Activated naive CD4-positive, alpha-beta T cell treated with anti-CD3 and anti-CD28 coated beads for 36 hours (primary cell): ENCODE measurements at regions of chr14 and their contacts with region 1.

Region 1: DNA sequence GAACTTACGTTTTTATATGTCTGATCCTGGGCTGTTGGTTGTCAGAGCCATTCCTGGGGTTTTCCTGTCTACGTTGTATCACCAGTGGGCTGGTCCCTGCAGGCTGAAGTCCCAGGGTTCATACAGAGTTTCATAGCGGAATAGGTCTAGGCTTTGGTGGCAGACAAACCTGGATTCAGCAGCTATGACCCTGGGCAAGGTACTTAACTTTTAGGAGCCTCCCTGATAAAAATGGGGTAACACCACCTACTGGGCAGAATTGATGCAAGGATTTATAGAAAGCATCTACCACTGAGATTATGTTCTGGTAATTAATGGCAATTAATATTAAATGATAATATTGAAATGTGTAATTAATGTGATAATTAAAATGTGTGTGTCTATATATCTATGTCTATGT is 141.2 kb downstream of the SYNE2 start:
- DNase-seq: peak; percentile 15
- H3K4me3 Mint-ChIP-seq: no peak overlapping the region
- H3K27ac Mint-ChIP-seq: no peak overlapping the region
- H3K4me1 Mint-ChIP-seq: no peaks in the 10 kb centered on the region
- H3K27me3 Mint-ChIP-seq: no peaks in the 10 kb centered on the region

Region 2: GRCh38 chr14:63752513-63753169 is 241.4 kb before region 1 on chr14:
- CTCF ChIA-PET with region 1: no interaction called
- intact Hi-C with region 1: no loop called
- DNase-seq: no peak
- H3K4me3 Mint-ChIP-seq: no peak overlapping the region
- H3K27ac Mint-ChIP-seq: no peak overlapping the region
- H3K4me1 Mint-ChIP-seq: no peaks in the 10 kb centered on the region
- H3K27me3 Mint-ChIP-seq: no peaks in the 10 kb centered on the region

Region 3: DNA sequence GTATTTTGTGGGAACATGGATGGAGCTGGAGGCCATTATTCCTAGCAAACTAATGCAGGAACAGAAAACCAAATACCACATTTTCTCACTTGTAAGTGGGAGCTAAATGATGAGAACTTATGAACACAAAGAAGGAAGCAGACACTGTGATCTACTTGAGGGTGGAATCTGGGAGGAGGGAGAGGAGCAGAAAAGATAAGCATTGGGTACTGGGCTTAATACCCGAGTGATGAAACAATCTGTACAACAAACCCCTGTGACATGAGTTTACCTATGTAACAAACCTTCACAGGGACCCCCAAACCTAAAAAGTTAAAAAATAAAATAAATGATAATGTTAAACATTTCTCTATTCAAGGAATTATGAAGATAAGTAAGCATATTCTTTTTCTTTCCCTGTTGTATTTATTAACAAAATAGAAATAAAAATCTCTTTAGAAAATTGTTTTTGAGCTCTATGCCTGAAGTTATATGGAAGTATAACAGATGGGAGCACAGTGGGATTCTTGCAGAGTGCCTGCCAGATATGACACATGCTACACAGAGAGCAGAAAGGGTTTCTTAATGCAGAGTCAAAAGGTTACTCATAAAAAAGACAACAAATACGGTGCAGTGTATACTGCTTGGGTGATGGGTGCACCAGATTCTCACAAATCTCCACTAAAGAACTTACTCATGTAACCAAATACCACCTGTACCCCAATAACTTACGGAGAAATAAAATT is 193.2 kb before region 1 on chr14:
- CTCF ChIA-PET with region 1: interaction called, 8 read pairs
- intact Hi-C with region 1: loop called (anchors 1 kb)
- DNase-seq: no peak
- H3K4me3 Mint-ChIP-seq: no peak overlapping the region
- H3K27ac Mint-ChIP-seq: no peak overlapping the region
- H3K4me1 Mint-ChIP-seq: no peaks in the 10 kb centered on the region
- H3K27me3 Mint-ChIP-seq: no peaks in the 10 kb centered on the region